Activated CD4-positive, alpha-beta T cell treated with anti-CD3 and anti-CD28 coated beads, Interleukin-2, amount 10 ng/mL, durations not matched to agents 7 days and 5 days (primary cell): ENCODE measurements at regions of chr10 and their contacts with region 1.

Region 1: DNA sequence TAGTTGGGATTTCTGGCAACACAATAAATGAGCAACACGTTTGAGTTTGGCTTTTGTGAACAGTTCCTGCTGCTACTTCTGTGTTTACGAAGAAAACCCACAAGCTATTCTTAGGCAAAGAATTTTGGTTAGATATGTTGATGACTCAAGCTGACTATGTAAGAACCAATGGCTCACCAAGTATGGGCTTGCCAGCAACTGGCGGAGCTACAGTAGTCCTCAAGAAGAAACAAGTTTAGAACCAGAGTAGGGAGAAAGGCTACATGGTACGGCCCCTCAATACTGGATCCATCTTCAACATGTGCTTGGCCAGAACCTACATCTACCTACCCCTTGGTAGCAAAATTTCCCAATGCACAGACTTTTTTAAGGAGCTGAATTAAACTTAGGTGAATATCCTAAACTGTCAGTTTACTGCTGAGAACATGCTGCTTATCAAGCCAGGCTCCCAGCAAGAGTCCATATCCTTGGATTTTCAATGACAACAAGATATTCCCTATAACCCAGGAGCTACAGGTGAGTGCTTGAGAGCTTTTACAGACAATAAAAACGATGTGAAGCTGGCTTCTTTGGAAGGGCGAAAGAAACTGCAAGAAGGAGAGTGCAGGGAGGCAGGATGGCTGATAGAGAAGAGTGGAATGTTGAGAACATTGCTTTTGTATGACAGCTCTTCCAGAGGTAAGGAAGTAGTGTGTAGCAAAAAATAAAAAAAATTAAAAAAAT is 74.3 kb upstream of the ASAH2 start:
- DNase-seq: peak; percentile 12
- H3K4me3 Mint-ChIP-seq: peak overlapping the region; percentile 11
- H3K27ac Mint-ChIP-seq: peak overlapping the region; percentile 70
- H3K4me1 Mint-ChIP-seq: peaks cover 35% of the 10 kb centered on the region
- H3K27me3 Mint-ChIP-seq: no peaks in the 10 kb centered on the region

Region 2: DNA sequence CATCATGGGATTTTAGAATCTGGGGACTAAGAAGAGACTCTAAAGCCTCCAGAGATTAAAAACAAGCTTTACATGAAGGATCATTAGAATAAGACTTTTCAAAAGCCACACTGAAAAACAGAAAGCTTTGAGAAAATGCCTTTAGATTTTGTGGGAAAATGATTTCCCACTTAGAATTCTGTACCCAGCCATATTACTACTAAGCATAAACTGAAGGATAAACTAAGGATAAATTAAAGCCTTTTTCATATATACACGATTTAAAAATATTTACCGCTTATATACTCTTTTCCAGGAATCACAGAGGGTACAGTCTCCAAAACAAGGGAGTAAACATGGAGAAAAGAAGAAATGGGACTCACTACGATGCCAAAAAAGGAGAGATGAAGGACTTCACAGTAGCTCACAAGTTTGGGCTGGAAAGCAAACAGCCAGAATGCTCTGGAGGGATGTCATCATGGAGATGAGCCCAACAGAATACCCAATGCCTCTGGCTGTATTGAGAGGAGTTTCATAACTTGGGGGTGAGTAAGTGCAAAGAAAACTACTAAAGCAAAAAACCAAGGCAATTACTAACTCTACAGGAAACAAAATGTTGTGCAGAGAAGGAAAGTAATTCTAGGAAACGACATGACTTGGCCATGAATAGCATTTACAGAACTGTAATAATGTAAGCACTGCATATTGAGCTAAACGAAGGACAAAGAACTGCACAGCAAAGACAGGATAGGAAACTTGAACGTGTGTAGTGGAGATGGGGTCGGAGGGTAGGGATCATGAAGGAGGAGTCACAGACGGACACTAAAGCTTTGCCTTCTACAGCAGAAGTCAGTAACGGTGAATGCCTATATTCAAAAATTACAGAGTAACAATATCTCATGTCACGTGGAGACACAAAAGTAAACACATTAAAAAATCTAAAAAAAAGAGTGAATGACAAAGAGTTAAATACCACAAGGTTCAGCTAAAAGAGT is 12.9 kb before region 1 on chr10:
- CTCF ChIA-PET with region 1: interaction called, 20 read pairs
- POLR2A ChIA-PET with region 1: no interaction called
- DNase-seq: no peak
- H3K4me3 Mint-ChIP-seq: no peak overlapping the region
- H3K27ac Mint-ChIP-seq: no peak overlapping the region
- H3K4me1 Mint-ChIP-seq: peaks cover 12% of the 10 kb centered on the region
- H3K27me3 Mint-ChIP-seq: no peaks in the 10 kb centered on the region